ENCODE measurements at regions of chr6 and their contacts with region 1.

Region 1: GRCh38 chr6:44297063-44298038 is 15.8 kb downstream of the AARS2 start:
- DNase-seq: peak; percentile 64
- H3K4me3 Mint-ChIP-seq: peak overlapping the region; percentile 53
- H3K27ac Mint-ChIP-seq: no peak overlapping the region
- H3K4me1 Mint-ChIP-seq: peaks cover 6% of the 10 kb centered on the region
- H3K27me3 Mint-ChIP-seq: peaks cover 34% of the 10 kb centered on the region

Region 2: DNA sequence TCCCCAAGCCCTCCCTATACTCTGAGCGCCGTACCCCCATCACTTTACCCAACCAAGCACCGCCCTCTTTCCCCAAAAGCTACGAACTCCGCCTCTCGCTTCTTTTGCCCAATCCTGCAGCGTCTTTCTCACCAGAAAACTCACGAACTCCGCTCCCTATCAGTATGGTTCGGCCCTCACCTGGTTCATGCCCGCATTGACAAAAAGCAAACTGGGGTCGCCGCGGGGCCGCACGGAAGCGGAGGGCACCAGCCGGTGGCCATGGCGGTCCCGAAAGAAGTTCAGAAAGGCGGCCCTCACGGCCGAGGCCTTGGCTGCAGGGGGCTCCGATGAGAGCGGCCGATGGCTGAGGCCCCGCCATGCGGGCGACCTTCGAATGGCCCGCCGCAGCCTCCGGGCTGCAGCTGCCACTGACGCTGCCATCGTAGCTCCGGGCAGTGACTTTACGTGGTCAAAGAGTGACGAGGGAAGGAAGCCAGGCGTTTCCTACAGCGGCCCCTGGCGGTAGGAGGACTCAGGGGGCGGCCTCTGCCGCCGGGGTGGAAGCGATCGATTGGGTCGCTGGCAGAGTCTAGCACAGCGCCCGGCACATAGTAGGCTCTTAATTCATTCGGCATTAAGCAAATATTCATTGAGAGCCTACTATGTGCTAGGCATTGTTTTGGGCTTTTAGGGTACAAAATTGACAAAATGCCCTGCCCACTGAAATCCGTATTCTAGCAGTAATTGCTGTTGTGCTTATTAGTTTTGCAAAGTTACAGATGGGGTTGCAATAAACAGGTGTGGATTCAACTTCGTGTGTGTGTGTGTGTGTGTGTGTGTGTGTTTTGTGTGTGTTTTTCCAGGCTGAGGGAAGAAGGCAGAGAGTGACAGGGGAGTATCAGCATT is 15.8 kb after region 1 on chr6 and contains the start of gene AARS2:
- CTCF ChIA-PET with region 1: interaction called, 44 read pairs
- POLR2A ChIA-PET with region 1: interaction called, 3 read pairs
- intact Hi-C with region 1: no loop called
- DNase-seq: peak; percentile 95
- H3K4me3 Mint-ChIP-seq: peak within 1 kb of the TSS; percentile 98
- H3K27ac Mint-ChIP-seq: peak within 1 kb of the TSS; percentile 89
- H3K4me1 Mint-ChIP-seq: peaks cover 20% of the 10 kb centered on the region
- H3K27me3 Mint-ChIP-seq: peaks cover 2% of the 10 kb centered on the region
- total RNA-seq, gene AARS2: 16.3 to 16.5 TPM

Measured in activated CD4-positive, alpha-beta memory T cell treated with anti-CD3 and anti-CD28 coated beads for 36 hours (primary cell).